Activated CD4-positive, alpha-beta T cell treated with anti-CD3 and anti-CD28 coated beads for 36 hours (primary cell): ENCODE measurements at regions of chr4 and their contacts with region 1.

Region 1: GRCh38 chr4:75484190-75484589 is 30.0 kb downstream of the RCHY1 start:
- DNase-seq: no peak
- ATAC-seq: no peak
- H3K4me3 Mint-ChIP-seq: no peak overlapping the region
- H3K27ac Mint-ChIP-seq: no peak overlapping the region
- H3K4me1 Mint-ChIP-seq: no peaks in the 10 kb centered on the region
- H3K27me3 Mint-ChIP-seq: no peaks in the 10 kb centered on the region

Region 2: DNA sequence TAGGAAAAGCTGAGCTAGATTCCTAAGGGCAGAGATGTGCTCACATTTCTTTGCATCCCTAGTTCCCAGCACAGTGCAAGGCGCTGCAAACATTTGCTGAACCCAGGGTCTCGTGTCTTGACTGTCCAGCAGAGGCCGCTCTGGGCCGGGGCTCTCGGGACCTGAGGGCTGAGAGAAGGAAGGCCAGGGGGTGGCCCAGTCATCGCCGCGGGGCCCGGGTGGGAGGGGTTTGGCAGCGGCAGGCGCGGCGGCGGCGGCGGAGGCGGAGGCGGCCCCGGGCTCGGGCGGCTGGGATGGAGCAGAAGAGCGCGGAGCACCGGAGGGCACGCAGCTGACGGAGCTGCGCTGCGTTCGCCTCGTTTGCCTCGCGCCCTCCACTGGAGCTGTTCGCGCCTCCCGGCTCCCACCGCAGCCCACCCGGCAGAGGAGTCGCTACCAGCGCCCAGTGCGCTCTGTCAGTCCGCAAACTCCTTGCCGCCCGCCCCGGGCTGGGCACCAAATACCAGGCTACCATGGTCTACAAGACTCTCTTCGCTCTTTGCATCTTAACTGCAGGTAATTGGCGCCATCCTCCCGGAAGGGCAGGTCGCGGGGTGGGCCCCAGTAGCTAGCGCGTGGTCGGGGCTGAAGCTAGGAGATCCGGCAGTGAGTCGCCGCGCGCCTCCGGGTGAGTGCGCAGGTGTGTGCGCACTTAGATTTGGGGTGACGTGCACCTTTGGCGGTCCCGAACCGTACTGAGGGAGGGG is 551.2 kb before region 1 on chr4 and contains the start of gene PARM1:
- CTCF ChIA-PET with region 1: no interaction called
- POLR2A ChIA-PET with region 1: no interaction called
- intact Hi-C with region 1: loop called in 1 of 2 experiments (anchors 10 kb)
- DNase-seq: peak; percentile 83
- ATAC-seq: peak; percentile 90
- H3K4me3 Mint-ChIP-seq: peak within 1 kb of the TSS; percentile 63
- H3K27ac Mint-ChIP-seq: no peak within 1 kb of the TSS
- H3K4me1 Mint-ChIP-seq: peaks cover 17% of the 10 kb centered on the region
- H3K27me3 Mint-ChIP-seq: peaks cover 59% of the 10 kb centered on the region
- total RNA-seq, gene PARM1: 0.04 to 0.05 TPM

Region 3: GRCh38 chr4:75211408-75211807 is 272.8 kb before region 1 on chr4:
- CTCF ChIA-PET with region 1: no interaction called
- POLR2A ChIA-PET with region 1: no interaction called
- intact Hi-C with region 1: no loop called
- DNase-seq: no peak
- ATAC-seq: no peak
- H3K4me3 Mint-ChIP-seq: no peak overlapping the region
- H3K27ac Mint-ChIP-seq: no peak overlapping the region
- H3K4me1 Mint-ChIP-seq: no peaks in the 10 kb centered on the region
- H3K27me3 Mint-ChIP-seq: no peaks in the 10 kb centered on the region